ENCODE measurements at regions of chr7 and their contacts with region 1.

Region 1: DNA sequence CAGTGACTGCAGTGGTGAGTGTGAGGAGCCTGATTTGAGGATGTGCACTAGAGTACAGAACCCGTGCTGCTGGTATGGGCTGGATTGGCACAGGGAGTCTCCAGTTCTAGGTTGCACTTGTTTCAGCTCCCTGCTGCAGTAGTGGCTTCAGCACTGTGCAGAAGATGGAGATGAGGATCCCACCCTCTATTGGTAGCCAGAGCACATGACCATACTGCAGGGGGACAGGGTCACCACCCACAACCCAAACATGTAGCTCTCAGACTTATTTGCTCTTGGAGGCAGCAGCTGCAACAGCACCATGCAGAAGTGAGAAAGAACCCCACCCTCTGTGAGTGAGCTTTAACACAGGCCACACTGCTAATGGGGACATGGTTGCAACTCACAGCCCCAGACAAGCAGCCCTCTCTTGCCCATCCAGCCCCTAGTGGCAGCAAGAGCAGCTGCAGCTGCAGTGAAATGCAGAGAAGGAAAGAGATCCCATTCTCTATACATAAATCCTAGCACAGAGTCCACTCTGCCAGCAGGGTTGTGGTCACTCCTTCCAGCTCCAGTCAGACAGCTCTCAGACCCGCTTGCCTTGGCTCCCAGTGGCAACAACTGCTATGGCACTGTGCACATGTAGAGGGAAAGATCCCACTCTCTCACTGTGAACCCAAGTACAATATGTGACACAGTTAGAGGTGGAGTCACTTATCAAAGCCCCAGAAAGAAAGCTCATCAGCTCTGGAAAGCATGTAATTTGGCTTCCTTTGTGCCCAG is 51.4 kb upstream of the SCIN start:
- DNase-seq: peak in 1 of 2 experiments; percentile 75
- H3K4me3 ChIP-seq: no peak overlapping the region
- H3K27ac ChIP-seq: no peak overlapping the region
- H3K4me1 ChIP-seq: peaks cover 0 to 3% (median 0%) of the 10 kb centered on the region in 4 experiments; a peak in 1 of 7 replicates
- H3K27me3 ChIP-seq: no peaks in the 10 kb centered on the region
- CTCF ChIP-seq: peak; percentile 74 to 95 (median 82)
- EP300 ChIP-seq: no peak
- POLR2A ChIP-seq: no peak
- RAD21 ChIP-seq: peak; percentile 53 to 61

Region 2: DNA sequence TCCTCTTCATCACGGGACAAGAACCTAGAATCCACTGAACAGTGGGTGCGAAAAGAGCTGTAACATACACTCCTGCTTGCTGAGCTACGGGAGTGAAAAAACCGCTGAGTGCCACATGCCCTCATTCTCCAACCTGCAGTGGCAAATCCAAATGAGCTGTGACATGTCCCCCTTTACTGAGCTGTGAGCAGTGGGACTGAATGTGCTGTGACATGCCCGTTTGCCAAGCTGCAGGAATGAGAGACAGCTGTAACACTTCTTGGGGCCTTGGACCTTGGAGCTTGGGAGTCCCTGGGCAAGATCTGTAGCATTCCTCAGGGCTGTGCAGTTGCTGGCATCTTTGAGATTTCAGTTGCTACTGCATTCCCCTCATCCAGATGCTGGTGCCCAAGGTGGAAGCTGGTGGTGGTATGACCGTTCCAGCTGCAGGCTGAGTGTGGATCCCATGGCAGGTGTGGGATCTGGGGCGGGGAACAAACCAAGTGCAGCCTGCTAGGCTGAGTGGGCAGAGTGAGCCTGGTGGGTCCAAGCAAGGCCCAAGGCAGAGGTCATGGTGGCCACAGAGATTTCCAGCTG is 223.0 kb before region 1 on chr7:
- CTCF ChIA-PET with region 1: no interaction called
- POLR2A ChIA-PET with region 1: no interaction called
- DNase-seq: no peak
- H3K4me3 ChIP-seq: no peak overlapping the region
- H3K27ac ChIP-seq: no peak overlapping the region
- H3K4me1 ChIP-seq: peaks cover 0 to 10% (median 2%) of the 10 kb centered on the region in 4 experiments; a peak in 2 of 7 replicates
- H3K27me3 ChIP-seq: no peaks in the 10 kb centered on the region
- CTCF ChIP-seq: no peak
- EP300 ChIP-seq: no peak
- POLR2A ChIP-seq: no peak
- RAD21 ChIP-seq: no peak

Region 3: DNA sequence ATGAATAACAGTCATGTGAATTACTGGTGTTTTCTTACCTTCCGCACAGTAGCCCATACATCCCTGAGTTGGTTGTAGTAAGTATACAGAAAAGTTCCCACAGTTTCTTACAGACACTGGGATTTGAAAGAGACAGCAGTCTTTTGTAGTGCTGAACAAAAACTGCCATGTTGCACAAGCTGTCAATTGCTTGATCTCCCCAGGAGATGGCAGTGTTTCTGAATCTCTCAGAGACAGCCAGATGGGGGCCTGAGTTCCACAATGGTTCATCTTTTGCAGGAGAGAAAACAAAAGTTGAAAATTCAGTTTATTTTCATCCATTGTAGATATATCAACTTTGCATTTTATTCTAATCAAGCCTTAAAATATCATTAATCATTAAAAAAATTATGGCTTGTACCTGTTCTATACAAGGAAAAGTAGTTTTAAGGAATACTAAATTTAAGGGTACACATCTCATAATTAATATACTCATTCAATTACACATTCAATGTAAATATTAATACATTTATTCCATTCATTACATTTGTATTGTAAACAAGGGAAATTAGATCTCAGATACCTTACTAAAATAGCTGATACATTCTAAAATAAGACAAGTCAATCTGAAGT is 129.9 kb before region 1 on chr7:
- CTCF ChIA-PET with region 1: interaction called, 11 read pairs
- POLR2A ChIA-PET with region 1: no interaction called
- DNase-seq: peak in 1 of 2 experiments; percentile 5
- H3K4me3 ChIP-seq: no peak overlapping the region
- H3K27ac ChIP-seq: no peak overlapping the region
- H3K4me1 ChIP-seq: peaks cover 0 to 3% (median 1%) of the 10 kb centered on the region in 4 experiments; a peak in 3 of 7 replicates
- H3K27me3 ChIP-seq: peaks cover 0 to 1% (median 0%) of the 10 kb centered on the region in 4 experiments; a peak in 1 of 7 replicates
- CTCF ChIP-seq: peak; percentile 47 to 97 (median 83)
- EP300 ChIP-seq: no peak
- POLR2A ChIP-seq: no peak
- RAD21 ChIP-seq: peak; percentile 73 to 86

Region 4: DNA sequence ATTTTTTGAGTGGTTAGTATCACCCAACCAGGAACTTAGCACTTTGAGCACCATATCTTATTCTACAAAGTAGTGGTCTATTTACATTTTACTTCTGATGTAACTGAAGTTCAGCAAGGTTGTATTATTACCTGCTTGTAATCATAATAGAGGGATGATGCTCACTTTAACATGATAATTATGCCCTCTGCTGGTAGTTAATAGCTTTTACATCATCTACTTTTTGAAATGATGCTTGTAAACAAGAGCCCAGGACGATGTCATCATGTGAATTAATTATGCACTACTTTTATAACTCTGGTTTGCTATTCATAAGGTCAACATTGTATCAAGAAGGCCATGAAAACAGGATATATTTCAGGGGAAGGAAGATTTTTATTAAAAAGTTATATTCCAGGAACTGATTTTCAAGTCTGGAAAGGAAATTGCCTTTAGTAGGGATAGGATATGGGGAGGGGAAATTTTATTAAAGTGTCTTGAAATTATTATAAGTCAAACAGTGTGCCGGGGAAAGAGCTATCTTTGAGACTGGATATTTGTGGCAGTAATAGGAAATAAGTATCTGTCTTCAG is 28.9 kb before region 1 on chr7:
- CTCF ChIA-PET with region 1: interaction called, 15 read pairs
- POLR2A ChIA-PET with region 1: no interaction called
- DNase-seq: no peak
- H3K4me3 ChIP-seq: no peak overlapping the region
- H3K27ac ChIP-seq: no peak overlapping the region
- H3K4me1 ChIP-seq: peaks cover 0 to 4% (median 0%) of the 10 kb centered on the region in 4 experiments; a peak in 1 of 7 replicates
- H3K27me3 ChIP-seq: no peaks in the 10 kb centered on the region
- CTCF ChIP-seq: peak in 2 of 3 experiments; percentile 44 to 51; a peak in 2 of 4 replicates
- EP300 ChIP-seq: no peak; a peak in 1 of 3 replicates
- POLR2A ChIP-seq: no peak
- RAD21 ChIP-seq: peak; percentile 55 to 62

Region 5: DNA sequence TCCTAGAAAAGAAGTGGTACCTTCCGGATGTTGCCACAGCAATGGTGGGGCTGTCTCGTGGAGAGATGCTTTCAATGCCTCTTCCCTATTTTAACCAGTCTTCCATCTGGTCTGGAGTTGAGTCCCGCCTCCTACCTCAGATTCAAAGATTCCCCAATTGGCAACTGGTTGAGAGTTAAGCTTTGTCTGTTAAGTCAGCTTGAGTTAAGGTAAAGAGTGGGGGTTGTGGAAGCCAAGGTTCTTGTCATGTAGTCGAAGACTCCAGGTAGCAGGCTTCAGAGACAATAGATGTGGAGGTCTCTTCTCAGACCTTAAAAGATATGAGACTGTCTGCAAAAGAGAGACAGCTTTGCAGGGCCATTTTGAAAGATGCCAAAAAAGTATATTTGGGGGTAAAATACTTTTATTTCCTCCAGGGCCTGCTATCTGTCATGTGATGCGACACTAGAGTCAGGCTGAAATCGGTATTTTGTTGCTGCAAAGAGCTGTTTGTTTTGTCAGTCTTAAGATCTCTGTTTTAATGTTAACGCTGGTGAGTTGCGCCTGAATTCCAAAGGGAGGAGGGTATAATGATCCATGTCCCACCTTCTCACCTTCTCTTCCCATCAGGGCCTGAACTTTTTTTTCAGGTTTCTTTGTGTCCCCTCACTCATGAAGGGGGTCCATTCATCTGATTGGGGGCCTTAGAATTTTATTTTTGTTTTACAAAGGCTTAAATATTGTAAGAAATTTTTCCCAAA is 11.0 kb after region 1 on chr7:
- CTCF ChIA-PET with region 1: interaction called, 41 read pairs
- POLR2A ChIA-PET with region 1: no interaction called
- DNase-seq: no peak
- H3K4me3 ChIP-seq: no peak overlapping the region; a peak in 1 of 8 replicates
- H3K27ac ChIP-seq: no peak overlapping the region
- H3K4me1 ChIP-seq: no peaks in the 10 kb centered on the region; a peak in 2 of 7 replicates
- H3K27me3 ChIP-seq: no peaks in the 10 kb centered on the region
- CTCF ChIP-seq: no peak
- EP300 ChIP-seq: no peak
- POLR2A ChIP-seq: no peak
- RAD21 ChIP-seq: no peak

Region 6: GRCh38 chr7:12609561-12609960 is 90.5 kb after region 1 on chr7:
- CTCF ChIA-PET with region 1: interaction called, 12 read pairs
- POLR2A ChIA-PET with region 1: no interaction called
- DNase-seq: no peak
- H3K4me3 ChIP-seq: no peak overlapping the region
- H3K27ac ChIP-seq: no peak overlapping the region
- H3K4me1 ChIP-seq: no peaks in the 10 kb centered on the region
- H3K27me3 ChIP-seq: no peaks in the 10 kb centered on the region
- CTCF ChIP-seq: no peak
- EP300 ChIP-seq: no peak
- POLR2A ChIP-seq: no peak
- RAD21 ChIP-seq: no peak

Measured in H1 (cell line).